Dendritic cell treated with granulocyte-macrophage colony-stimulating factor and Interleukin-4, amounts not matched to agents 40 ng/mL and 50 ng/mL, for 4 days (primary cell): ENCODE measurements at regions of chr4 and their contacts with region 1.

Region 1: DNA sequence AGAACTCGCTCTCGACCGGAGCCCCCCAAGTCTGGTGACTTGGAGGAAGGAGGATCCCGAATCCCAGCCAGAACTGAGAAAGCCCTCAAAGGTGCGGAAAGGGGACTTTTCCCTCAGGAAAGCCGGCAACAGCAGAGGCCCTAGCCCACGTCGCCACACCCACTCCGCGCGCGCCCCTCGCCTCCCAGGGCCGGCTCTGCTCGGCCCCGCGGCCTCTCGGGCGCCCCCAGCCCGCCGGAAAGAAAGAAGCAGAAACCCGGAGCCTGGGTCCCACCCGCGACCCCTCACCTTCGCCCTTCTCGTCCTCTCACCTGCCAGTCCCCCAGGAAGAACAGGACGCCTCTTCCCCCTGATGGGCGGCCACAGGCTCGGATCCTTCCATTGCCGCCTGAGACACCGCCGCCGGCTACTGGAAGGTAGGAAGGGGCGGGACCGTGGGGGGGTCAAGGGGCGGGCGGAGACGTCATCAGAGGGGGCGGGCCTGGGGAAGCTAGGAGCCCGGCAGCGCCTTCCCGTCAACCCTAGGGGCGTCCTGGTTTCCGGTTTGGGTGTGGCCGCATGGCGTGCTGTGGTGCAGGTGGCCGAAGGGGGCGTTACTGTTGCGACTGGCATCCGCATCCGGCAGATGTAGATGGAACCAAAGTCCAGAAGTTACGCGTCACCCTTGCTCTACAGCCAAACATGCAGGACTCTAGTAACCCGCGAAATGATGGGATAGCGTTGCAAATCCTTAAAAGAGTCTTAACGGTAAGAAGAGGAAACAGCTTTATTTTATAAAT is at the start of gene UBA6:
- H3K4me3 Mint-ChIP-seq: peak within 1 kb of the TSS; percentile 92
- H3K27ac Mint-ChIP-seq: peak within 1 kb of the TSS; percentile 93
- H3K4me1 Mint-ChIP-seq: peaks cover 39% of the 10 kb centered on the region
- H3K27me3 Mint-ChIP-seq: no peaks in the 10 kb centered on the region

Region 2: GRCh38 chr4:68038272-68038671 is 337.3 kb after region 1 on chr4:
- intact Hi-C with region 1: no loop called
- H3K4me3 Mint-ChIP-seq: no peak overlapping the region
- H3K27ac Mint-ChIP-seq: no peak overlapping the region
- H3K4me1 Mint-ChIP-seq: no peaks in the 10 kb centered on the region
- H3K27me3 Mint-ChIP-seq: no peaks in the 10 kb centered on the region

Region 3: DNA sequence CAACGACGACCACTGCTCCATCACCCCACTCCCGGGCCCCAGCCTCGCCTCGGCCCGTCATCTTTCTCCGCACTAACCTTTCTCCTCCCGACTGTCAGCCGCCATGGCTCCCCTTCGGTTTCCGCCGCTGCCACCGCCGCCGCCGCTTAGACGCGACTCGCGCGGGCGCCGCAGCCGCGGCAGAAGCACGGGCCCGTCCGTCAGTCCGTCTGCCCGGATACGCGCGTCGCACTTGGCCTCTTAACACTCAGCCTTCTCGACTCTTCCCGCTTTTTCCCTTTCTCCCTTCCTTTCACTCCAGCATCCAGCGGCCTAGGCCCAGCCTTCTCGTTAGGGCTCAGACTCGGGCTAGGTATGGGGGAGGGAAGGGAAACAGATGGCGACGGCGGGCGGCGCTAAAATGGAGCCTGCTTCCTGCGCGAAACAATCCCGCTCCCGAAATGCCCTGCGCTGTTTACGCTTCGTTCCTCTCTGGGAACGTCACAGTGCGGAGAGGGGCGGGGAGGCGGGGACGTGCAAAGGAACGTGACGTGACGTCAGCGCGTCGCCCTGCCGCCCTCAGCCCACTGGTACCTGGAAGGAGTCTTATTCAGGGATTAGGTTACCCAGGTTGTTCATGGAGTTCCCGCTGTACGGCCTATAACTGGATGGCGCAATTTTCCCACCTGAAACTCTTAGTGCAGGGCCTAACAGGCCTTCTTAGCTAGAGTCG is 648.9 kb after region 1 on chr4 and contains the start of gene YTHDC1:
- intact Hi-C with region 1: loop called (anchors 10 kb)
- H3K4me3 Mint-ChIP-seq: peak within 1 kb of the TSS; percentile 93
- H3K27ac Mint-ChIP-seq: peak within 1 kb of the TSS; percentile 97
- H3K4me1 Mint-ChIP-seq: peaks cover 22% of the 10 kb centered on the region
- H3K27me3 Mint-ChIP-seq: peaks cover 6% of the 10 kb centered on the region